Prostate gland (tissue), 2 donors: ENCODE measurements at regions of chr6 and their contacts with region 1.

Region 1: GRCh38 chr6:105424175-105424783 is 21.4 kb upstream of the PREP start:
- DNase-seq: no peak
- H3K4me3 ChIP-seq: no peak overlapping the region
- H3K27ac ChIP-seq: no peak overlapping the region
- H3K4me1 ChIP-seq: no peaks in the 10 kb centered on the region
- H3K27me3 ChIP-seq: no peaks in the 10 kb centered on the region
- CTCF ChIP-seq: peak; percentile 30 to 63 (median 53)
- POLR2A ChIP-seq: no peak

Region 2: GRCh38 chr6:105087571-105088211 is 336.6 kb before region 1 on chr6:
- intact Hi-C with region 1: loop called (anchors 5 kb)
- DNase-seq: peak; percentile 62
- H3K4me3 ChIP-seq: no peak overlapping the region
- H3K27ac ChIP-seq: no peak overlapping the region
- H3K4me1 ChIP-seq: no peaks in the 10 kb centered on the region
- H3K27me3 ChIP-seq: no peaks in the 10 kb centered on the region
- CTCF ChIP-seq: peak; percentile 77 to 91 (median 84)
- POLR2A ChIP-seq: no peak

Region 3: DNA sequence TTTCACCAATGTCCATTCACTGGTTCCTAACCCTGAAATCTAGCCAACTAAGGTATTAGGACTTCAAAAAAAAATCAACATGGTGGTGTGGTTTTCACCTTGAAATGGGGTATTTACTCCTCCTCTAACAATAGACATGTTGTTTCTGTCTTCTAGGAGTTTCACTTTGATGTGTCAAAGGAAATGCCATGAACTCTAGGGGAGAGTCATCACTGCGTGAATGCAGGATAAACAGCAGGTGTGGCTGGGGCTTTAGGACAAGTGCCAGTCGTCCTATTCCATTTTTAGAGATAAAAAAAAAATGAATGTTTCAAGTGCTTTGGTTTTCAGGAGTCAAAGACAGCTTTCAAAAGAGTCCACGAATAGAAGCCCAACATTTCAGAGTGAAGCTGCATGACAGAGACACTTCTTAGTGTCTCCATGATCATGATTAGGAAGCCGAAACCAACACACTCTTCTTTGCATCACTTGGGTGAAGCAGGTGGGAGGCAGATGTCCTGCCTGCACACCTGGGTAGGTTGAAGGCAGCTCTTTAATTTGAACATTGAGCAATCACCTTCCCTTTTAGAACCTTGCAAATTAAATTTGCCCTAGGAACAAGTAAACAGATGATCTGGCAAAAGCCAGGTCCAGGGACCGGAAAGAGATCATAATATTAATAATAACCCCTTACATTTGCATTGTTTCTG is 333.4 kb after region 1 on chr6:
- intact Hi-C with region 1: no loop called
- DNase-seq: no peak
- H3K4me3 ChIP-seq: no peak overlapping the region
- H3K27ac ChIP-seq: no peak overlapping the region
- H3K4me1 ChIP-seq: no peaks in the 10 kb centered on the region
- H3K27me3 ChIP-seq: no peaks in the 10 kb centered on the region
- CTCF ChIP-seq: no peak
- POLR2A ChIP-seq: no peak

Region 4: DNA sequence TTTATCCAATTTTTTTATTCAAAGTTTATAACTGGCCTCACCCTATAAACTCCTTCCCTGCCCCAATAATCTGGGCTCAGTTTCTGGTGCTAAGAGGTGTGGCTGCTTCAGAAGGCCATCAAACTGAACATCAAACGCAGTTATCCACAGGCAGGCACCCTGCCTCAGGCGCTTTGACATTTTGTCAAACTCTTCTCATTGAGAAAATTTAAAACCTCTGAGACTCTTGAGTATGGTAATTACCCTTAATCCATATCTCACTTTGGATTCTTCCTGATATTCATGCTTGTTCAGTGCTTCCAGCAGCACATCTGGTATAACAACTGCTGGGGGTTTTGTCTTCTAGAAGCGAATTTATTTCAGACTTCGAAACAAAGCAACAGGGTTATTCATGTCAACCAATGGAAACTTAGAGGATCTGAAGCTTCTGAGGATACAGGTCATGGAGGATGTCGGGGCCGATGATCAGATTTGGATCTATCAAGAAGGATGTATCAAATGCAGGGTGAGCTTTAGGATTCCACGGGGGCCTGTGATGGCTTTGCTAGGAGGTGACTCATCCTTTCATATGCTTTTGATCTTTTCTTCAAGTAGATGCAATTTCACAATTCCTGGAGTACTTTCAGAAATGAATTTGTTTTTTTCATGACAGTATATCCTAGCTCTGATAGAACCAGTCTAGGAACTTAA is 1136.9 kb after region 1 on chr6:
- intact Hi-C with region 1: loop called (anchors 10 kb)
- DNase-seq: no peak
- H3K4me3 ChIP-seq: no peak overlapping the region
- H3K27ac ChIP-seq: peak overlapping the region; percentile 67 to 70
- H3K4me1 ChIP-seq: no peaks in the 10 kb centered on the region
- H3K27me3 ChIP-seq: no peaks in the 10 kb centered on the region
- CTCF ChIP-seq: no peak
- POLR2A ChIP-seq: no peak